ENCODE measurements at regions of chr5 and their contacts with region 1.

Region 1: DNA sequence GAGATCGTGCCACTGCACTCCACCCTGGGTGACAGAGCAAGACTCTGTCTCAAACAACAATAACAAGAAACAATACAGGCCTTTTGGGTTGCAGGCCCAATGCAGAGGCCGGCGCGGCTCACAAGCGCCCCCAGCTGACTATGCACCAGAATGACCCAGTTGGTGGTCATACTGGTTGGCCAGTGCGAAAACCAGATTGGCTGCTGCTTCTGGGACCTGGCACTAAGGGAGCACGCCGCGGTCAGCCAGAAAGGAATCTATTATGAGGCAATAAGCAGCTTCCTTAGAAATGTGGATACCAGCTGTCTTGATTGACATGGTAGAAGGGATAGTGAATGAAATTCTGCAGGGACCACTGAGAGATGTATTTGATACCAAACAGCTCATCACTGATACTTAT is 35.0 kb downstream of the RANBP17 start:
- DNase-seq: peak; percentile 53
- H3K4me3 Mint-ChIP-seq: no peak overlapping the region
- H3K27ac Mint-ChIP-seq: no peak overlapping the region
- H3K4me1 Mint-ChIP-seq: peaks cover under 1% of the 10 kb centered on the region
- H3K27me3 Mint-ChIP-seq: no peaks in the 10 kb centered on the region
- CTCF ChIP-seq: peak; percentile 34

Region 2: GRCh38 chr5:170917113-170917512 is 20.3 kb after region 1 on chr5:
- CTCF ChIA-PET with region 1: interaction called, 11 read pairs
- intact Hi-C with region 1: no loop called
- DNase-seq: no peak
- H3K4me3 Mint-ChIP-seq: no peak overlapping the region
- H3K27ac Mint-ChIP-seq: peak overlapping the region; percentile 18
- H3K4me1 Mint-ChIP-seq: no peaks in the 10 kb centered on the region
- H3K27me3 Mint-ChIP-seq: no peaks in the 10 kb centered on the region
- CTCF ChIP-seq: no peak